Activated CD8-positive, alpha-beta T cell treated with anti-CD3 and anti-CD28 coated beads, Interleukin-2, amount 10 ng/mL, durations not matched to agents 7 days and 5 days (primary cell): ENCODE measurements at regions of chr17 and their contacts with region 1.

Region 1: GRCh38 chr17:63425482-63425881 is 20.6 kb downstream of the CYB561 start:
- DNase-seq: peak; percentile 83
- ATAC-seq: peak; percentile 82
- H3K4me3 Mint-ChIP-seq: no peak overlapping the region
- H3K27ac Mint-ChIP-seq: no peak overlapping the region
- H3K4me1 Mint-ChIP-seq: peaks cover 52% of the 10 kb centered on the region
- H3K27me3 Mint-ChIP-seq: no peaks in the 10 kb centered on the region

Region 2: GRCh38 chr17:63406689-63407330 is 18.7 kb before region 1 on chr17:
- CTCF ChIA-PET with region 1: interaction called, 70 read pairs
- POLR2A ChIA-PET with region 1: no interaction called
- DNase-seq: peak; percentile 84
- ATAC-seq: peak; percentile 93
- H3K4me3 Mint-ChIP-seq: no peak overlapping the region
- H3K27ac Mint-ChIP-seq: no peak overlapping the region
- H3K4me1 Mint-ChIP-seq: peaks cover 1% of the 10 kb centered on the region
- H3K27me3 Mint-ChIP-seq: no peaks in the 10 kb centered on the region

Region 3: GRCh38 chr17:63455417-63455816 is 29.9 kb after region 1 on chr17:
- CTCF ChIA-PET with region 1: interaction called, 18 read pairs
- POLR2A ChIA-PET with region 1: no interaction called
- DNase-seq: no peak
- ATAC-seq: no peak
- H3K4me3 Mint-ChIP-seq: no peak overlapping the region
- H3K27ac Mint-ChIP-seq: no peak overlapping the region
- H3K4me1 Mint-ChIP-seq: peaks cover 4% of the 10 kb centered on the region
- H3K27me3 Mint-ChIP-seq: peaks cover 2% of the 10 kb centered on the region

Region 4: GRCh38 chr17:63549946-63550807 is 124.7 kb after region 1 on chr17 and contains the start of gene DCAF7:
- CTCF ChIA-PET with region 1: interaction called, 11 read pairs
- POLR2A ChIA-PET with region 1: no interaction called
- DNase-seq: peak; percentile 100
- ATAC-seq: peak; percentile 96
- H3K4me3 Mint-ChIP-seq: peak within 1 kb of the TSS; percentile 99
- H3K27ac Mint-ChIP-seq: peak within 1 kb of the TSS; percentile 97
- H3K4me1 Mint-ChIP-seq: peaks cover 27% of the 10 kb centered on the region
- H3K27me3 Mint-ChIP-seq: no peaks in the 10 kb centered on the region
- total RNA-seq, gene DCAF7: 127 TPM

Region 5: DNA sequence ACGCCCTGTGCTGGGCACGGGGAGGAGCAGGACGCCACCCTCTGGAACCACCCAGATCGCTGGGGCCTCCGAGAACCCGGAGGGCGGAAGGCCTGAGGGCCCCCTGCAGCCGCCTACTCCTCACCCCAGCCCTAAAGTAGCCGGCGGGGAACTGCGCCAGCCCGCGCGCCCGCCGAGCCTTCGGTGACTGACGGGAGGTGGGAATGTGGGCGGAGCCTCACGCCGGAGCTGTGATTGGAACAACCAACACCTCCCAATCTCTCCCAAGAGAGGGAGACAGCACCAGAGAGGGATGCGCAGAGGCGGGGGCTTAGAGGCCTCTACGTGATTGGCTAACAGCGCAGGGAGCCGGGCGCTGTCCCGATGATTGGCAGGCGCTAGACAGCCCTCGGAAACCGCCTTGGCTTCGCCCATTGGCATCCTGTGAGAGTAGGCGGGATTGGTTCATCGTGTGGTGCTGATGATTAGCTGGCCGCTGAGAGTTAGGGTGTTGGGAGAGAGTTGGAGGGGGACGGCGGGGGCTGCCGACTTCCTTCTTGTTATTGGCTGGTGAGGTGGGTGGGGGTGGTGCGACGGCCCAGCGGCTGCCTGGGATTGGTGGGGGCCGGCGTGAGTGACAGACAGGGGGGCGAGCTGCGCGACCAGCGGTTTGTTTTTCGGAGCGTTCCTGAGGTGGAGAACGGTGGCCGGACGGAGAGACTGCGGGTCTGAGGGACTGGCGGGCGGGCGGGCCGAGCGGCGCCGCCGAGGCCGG is 196.5 kb after region 1 on chr17 and contains the start of gene MAP3K3:
- CTCF ChIA-PET with region 1: interaction called, 24 read pairs
- POLR2A ChIA-PET with region 1: interaction called, 4 read pairs
- DNase-seq: peak; percentile 99
- ATAC-seq: peak; percentile 94
- H3K4me3 Mint-ChIP-seq: peak within 1 kb of the TSS; percentile 96
- H3K27ac Mint-ChIP-seq: peak within 1 kb of the TSS; percentile 89
- H3K4me1 Mint-ChIP-seq: peaks cover 32% of the 10 kb centered on the region
- H3K27me3 Mint-ChIP-seq: peaks cover 11% of the 10 kb centered on the region
- total RNA-seq, gene MAP3K3: 31.4 to 32.8 TPM

Region 6: DNA sequence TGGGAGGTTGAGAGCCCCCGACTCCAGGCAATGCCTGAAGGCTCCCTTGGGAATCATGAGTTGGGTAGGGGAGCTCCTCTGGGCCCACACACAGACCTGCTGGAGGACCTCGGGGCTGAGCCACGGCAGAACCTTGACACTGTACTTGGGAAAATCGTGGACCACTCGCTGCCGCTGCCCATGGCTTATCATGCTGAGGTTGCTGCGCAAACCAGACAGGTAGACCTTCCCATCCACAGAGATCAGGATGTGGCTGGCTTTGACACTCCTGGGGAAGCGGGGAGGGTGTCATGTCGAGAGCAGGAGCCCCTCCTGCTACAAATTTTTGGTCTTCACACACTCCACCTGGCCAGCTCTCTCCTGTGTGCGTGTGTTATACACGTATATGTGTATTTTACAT is 281.7 kb after region 1 on chr17:
- CTCF ChIA-PET with region 1: interaction called, 12 read pairs
- POLR2A ChIA-PET with region 1: no interaction called
- DNase-seq: no peak
- ATAC-seq: peak; percentile 4
- H3K4me3 Mint-ChIP-seq: peak overlapping the region; percentile 52
- H3K27ac Mint-ChIP-seq: peak overlapping the region; percentile 74
- H3K4me1 Mint-ChIP-seq: peaks cover 80% of the 10 kb centered on the region
- H3K27me3 Mint-ChIP-seq: no peaks in the 10 kb centered on the region